ENCODE measurements at regions of chr12 and their contacts with region 1.

Region 1: GRCh38 chr12:53757095-53757770 is 5.5 kb upstream of the CISTR start:
- DNase-seq: peak; percentile 47 to 88 (median 72)
- ATAC-seq: peak; percentile 78 to 89 (median 80)
- H3K4me3 ChIP-seq: no peak overlapping the region
- H3K4me3 Mint-ChIP-seq: peak overlapping the region in 1 of 3 donors; percentile 29
- H3K27ac ChIP-seq: no peak overlapping the region
- H3K27ac Mint-ChIP-seq: no peak overlapping the region
- H3K4me1 ChIP-seq: peaks cover 2 to 15% of the 10 kb centered on the region in 2 experiments
- H3K4me1 Mint-ChIP-seq: peaks cover 5 to 21% (median 19%) of the 10 kb centered on the region in 3 donors
- H3K27me3 ChIP-seq: peaks cover 28 to 58% of the 10 kb centered on the region in 2 experiments
- H3K27me3 Mint-ChIP-seq: peaks cover 42 to 45% of the 10 kb centered on the region in 2 donors

Region 2: GRCh38 chr12:53701518-53702260 is 55.5 kb before region 1 on chr12:
- CTCF ChIA-PET with region 1: interaction called, 3 to 11 read pairs
- POLR2A ChIA-PET with region 1: no interaction called
- DNase-seq: peak; percentile 22 to 83 (median 65)
- ATAC-seq: peak; percentile 83 to 95 (median 91)
- H3K4me3 ChIP-seq: no peak overlapping the region
- H3K4me3 Mint-ChIP-seq: no peak overlapping the region
- H3K27ac ChIP-seq: no peak overlapping the region
- H3K27ac Mint-ChIP-seq: no peak overlapping the region
- H3K4me1 ChIP-seq: peaks cover 0 to 7% of the 10 kb centered on the region in 2 experiments
- H3K4me1 Mint-ChIP-seq: peaks cover 4 to 13% (median 4%) of the 10 kb centered on the region in 3 donors
- H3K27me3 ChIP-seq: peaks cover 34 to 61% of the 10 kb centered on the region in 2 experiments
- H3K27me3 Mint-ChIP-seq: peaks cover 79 to 87% of the 10 kb centered on the region in 2 donors

Region 3: DNA sequence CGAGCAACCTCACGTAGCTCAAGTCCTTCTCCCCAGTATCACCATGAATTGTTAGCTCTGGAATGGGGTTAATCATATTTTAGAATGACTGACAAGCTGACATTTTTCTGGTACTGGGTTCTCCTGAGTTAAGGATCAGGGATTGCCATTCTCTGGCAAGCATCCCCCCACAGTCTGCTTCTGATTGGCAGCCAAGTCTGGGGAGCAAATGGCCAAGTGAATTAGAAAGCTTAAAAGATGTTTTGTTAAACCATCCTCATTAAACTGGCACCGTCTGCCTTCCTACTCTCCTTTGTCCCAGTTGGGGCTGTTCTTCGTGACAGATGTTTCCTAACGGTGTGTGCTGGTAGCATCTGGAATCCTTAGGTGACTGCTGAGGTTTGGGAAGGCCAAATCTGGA is 11.7 kb after region 1 on chr12:
- CTCF ChIA-PET with region 1: interaction called in 1 of 2 experiments, 11 read pairs
- POLR2A ChIA-PET with region 1: no interaction called
- DNase-seq: no peak
- ATAC-seq: no peak
- H3K4me3 ChIP-seq: no peak overlapping the region
- H3K4me3 Mint-ChIP-seq: no peak overlapping the region
- H3K27ac ChIP-seq: no peak overlapping the region
- H3K27ac Mint-ChIP-seq: no peak overlapping the region
- H3K4me1 ChIP-seq: no peaks in the 10 kb centered on the region
- H3K4me1 Mint-ChIP-seq: no peaks in the 10 kb centered on the region
- H3K27me3 ChIP-seq: peaks cover 15 to 26% of the 10 kb centered on the region in 2 experiments
- H3K27me3 Mint-ChIP-seq: peaks cover 57 to 58% of the 10 kb centered on the region in 2 donors

Region 4: GRCh38 chr12:53806721-53807120 is 49.5 kb after region 1 on chr12:
- CTCF ChIA-PET with region 1: no interaction called
- POLR2A ChIA-PET with region 1: no interaction called
- DNase-seq: no peak
- ATAC-seq: no peak
- H3K4me3 ChIP-seq: no peak overlapping the region
- H3K4me3 Mint-ChIP-seq: no peak overlapping the region
- H3K27ac ChIP-seq: no peak overlapping the region
- H3K27ac Mint-ChIP-seq: no peak overlapping the region
- H3K4me1 ChIP-seq: no peaks in the 10 kb centered on the region
- H3K4me1 Mint-ChIP-seq: no peaks in the 10 kb centered on the region
- H3K27me3 ChIP-seq: peaks cover 7 to 37% of the 10 kb centered on the region in 2 experiments
- H3K27me3 Mint-ChIP-seq: peaks cover 42 to 45% of the 10 kb centered on the region in 2 donors

Measured in T-cell (primary cell).